Caco-2 (cell line): ENCODE measurements at regions of chr10 and their contacts with region 1.

Region 1: GRCh38 chr10:8616166-8616565 is 561.7 kb downstream of the GATA3 start:
- DNase-seq: peak; percentile 61 to 65
- H3K4me3 ChIP-seq: no peak overlapping the region
- H3K4me3 Mint-ChIP-seq: peak overlapping the region; percentile 12
- H3K27ac Mint-ChIP-seq: peak overlapping the region; percentile 40
- H3K4me1 ChIP-seq: peaks cover 23% of the 10 kb centered on the region
- H3K4me1 Mint-ChIP-seq: peaks cover 7% of the 10 kb centered on the region
- H3K27me3 ChIP-seq: no peaks in the 10 kb centered on the region
- H3K27me3 Mint-ChIP-seq: no peaks in the 10 kb centered on the region
- CTCF ChIP-seq: no peak

Region 2: DNA sequence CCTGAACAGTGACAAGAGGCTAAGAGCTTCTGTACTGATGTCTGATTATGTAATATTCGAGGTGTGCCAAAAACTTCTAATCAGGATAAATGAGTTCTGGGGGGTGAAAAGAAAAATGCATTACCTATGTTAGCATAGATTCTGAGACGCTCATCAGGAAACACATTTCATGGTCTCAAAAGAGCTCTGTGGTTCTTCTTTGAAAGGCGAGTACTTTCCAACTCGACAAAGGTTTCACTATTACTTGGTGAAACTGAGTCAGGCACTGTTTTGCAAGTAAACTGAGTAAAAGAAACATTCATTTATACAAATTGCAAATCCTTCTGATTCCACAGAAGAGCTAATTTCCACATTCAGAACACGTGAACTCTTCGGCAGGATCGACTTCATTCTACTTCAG is 38.5 kb before region 1 on chr10:
- CTCF ChIA-PET with region 1: no interaction called
- POLR2A ChIA-PET with region 1: no interaction called
- intact Hi-C with region 1: no loop called
- DNase-seq: no peak
- H3K4me3 ChIP-seq: no peak overlapping the region
- H3K4me3 Mint-ChIP-seq: no peak overlapping the region
- H3K27ac Mint-ChIP-seq: no peak overlapping the region
- H3K4me1 ChIP-seq: no peaks in the 10 kb centered on the region
- H3K4me1 Mint-ChIP-seq: peaks cover 10% of the 10 kb centered on the region
- H3K27me3 ChIP-seq: no peaks in the 10 kb centered on the region
- H3K27me3 Mint-ChIP-seq: peaks cover 10% of the 10 kb centered on the region
- CTCF ChIP-seq: no peak

Region 3: DNA sequence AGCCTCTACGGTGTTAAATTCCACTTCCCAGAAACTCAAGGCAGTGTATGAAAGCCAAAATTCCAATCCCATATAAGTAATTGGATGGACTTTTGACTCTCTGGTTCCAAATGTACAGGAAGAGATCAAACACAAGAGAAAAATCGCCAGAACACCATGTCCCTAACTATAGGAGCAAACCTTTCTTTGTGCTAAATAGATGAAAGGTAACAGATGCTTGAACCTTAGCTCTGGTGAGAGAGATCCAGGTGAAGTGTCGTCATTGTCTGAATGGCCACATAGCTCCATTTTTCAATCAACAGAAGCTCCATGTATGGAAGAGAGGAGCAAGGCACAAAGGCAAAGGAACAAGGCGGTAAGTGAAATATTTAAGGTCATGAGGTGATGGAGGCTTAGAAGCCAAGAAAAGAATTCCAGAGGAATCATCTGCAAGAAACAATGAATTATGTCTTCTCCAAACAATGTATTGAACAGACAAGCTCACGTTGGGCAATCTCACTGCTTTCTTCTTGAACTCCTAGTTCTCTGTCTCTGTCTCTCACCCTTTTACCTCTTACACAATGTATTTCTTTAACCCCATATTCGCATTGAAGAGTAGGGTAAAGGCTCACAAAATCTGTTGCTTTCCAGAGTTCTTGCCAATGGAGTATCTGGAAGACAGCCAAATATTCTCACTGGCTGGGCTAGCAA is 23.5 kb after region 1 on chr10:
- CTCF ChIA-PET with region 1: no interaction called
- POLR2A ChIA-PET with region 1: no interaction called
- intact Hi-C with region 1: loop called (anchors 1 kb)
- DNase-seq: peak in 1 of 2 experiments; percentile 3
- H3K4me3 ChIP-seq: no peak overlapping the region
- H3K4me3 Mint-ChIP-seq: no peak overlapping the region
- H3K27ac Mint-ChIP-seq: no peak overlapping the region
- H3K4me1 ChIP-seq: no peaks in the 10 kb centered on the region
- H3K4me1 Mint-ChIP-seq: peaks cover 8% of the 10 kb centered on the region
- H3K27me3 ChIP-seq: no peaks in the 10 kb centered on the region
- H3K27me3 Mint-ChIP-seq: peaks cover 9% of the 10 kb centered on the region
- CTCF ChIP-seq: no peak